Gastrocnemius medialis (tissue), 4 donors: ENCODE measurements at regions of chr11 and their contacts with region 1.

Region 1: GRCh38 chr11:66958232-66958955 is at the start of gene PC:
- DNase-seq: peak; percentile 100
- ATAC-seq: peak; percentile 96 to 97
- H3K4me3 ChIP-seq: peak within 1 kb of the TSS; percentile 59 to 82 (median 62)
- H3K27ac ChIP-seq: peak within 1 kb of the TSS; percentile 83 to 91 (median 87)
- H3K4me1 ChIP-seq: peaks cover 5 to 22% of the 10 kb centered on the region in 2 donors
- H3K27me3 ChIP-seq: no peaks in the 10 kb centered on the region
- CTCF ChIP-seq: no peak
- POLR2A ChIP-seq: peak; percentile 90 to 95
- total RNA-seq, gene PC: 13.1 to 67.6 (median 32.1) TPM

Region 2: DNA sequence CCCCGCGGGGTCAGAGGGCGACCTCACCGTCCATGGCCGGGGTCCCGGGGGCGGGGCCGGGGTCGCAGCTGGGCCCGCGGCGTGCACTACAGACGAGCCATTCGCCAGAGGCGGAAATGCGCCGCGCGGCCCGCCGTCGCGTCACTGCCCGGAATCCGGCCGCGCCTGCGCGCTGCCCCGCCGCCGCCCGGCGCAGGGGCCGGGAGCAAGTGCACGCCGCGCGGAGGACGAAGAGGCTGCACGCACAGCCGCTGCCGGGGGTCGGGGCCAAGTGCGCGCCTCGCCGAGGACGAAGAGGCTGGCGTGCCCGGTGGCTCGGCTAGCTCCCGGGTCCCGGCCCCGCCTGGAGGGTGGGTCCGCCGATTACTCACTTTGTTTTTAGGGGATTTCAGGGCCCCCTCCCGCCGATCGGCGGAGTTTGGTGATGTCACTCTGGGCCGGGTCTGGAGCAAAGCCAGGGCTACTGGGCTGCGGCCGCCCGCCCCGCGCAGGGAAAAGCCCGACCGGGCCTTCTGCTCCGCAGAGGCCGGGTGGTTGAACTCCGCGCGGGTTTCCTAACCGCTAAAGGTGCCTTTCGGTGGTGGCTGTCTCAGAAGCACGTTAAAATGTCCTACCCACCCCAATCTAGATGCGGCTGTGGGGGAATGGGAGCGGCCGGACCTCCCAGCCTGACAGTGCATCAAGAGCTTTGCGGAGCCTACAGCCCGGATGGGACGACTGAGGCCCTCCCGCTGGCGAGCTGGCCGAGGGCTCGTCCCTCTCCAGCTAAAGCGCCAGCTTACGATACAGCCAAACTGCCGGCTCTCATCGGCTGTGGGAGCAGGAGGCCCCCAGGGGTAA is 1295.4 kb before region 1 on chr11 and contains the start of gene RELA:
- in situ Hi-C with region 1: no loop called
- intact Hi-C with region 1: loop called (anchors 5 kb)
- DNase-seq: peak; percentile 78 to 89
- ATAC-seq: peak; percentile 90
- H3K4me3 ChIP-seq: peak within 1 kb of the TSS; percentile 65 to 91 (median 78)
- H3K27ac ChIP-seq: peak within 1 kb of the TSS; percentile 91 to 99 (median 96)
- H3K4me1 ChIP-seq: peaks cover 22 to 26% of the 10 kb centered on the region in 2 donors
- H3K27me3 ChIP-seq: no peaks in the 10 kb centered on the region
- CTCF ChIP-seq: peak in 3 of 5 experiments; percentile 11 to 43 (median 29)
- POLR2A ChIP-seq: peak; percentile 82 to 88
- total RNA-seq, gene RELA: 39.7 to 68.3 (median 56.3) TPM

Region 3: DNA sequence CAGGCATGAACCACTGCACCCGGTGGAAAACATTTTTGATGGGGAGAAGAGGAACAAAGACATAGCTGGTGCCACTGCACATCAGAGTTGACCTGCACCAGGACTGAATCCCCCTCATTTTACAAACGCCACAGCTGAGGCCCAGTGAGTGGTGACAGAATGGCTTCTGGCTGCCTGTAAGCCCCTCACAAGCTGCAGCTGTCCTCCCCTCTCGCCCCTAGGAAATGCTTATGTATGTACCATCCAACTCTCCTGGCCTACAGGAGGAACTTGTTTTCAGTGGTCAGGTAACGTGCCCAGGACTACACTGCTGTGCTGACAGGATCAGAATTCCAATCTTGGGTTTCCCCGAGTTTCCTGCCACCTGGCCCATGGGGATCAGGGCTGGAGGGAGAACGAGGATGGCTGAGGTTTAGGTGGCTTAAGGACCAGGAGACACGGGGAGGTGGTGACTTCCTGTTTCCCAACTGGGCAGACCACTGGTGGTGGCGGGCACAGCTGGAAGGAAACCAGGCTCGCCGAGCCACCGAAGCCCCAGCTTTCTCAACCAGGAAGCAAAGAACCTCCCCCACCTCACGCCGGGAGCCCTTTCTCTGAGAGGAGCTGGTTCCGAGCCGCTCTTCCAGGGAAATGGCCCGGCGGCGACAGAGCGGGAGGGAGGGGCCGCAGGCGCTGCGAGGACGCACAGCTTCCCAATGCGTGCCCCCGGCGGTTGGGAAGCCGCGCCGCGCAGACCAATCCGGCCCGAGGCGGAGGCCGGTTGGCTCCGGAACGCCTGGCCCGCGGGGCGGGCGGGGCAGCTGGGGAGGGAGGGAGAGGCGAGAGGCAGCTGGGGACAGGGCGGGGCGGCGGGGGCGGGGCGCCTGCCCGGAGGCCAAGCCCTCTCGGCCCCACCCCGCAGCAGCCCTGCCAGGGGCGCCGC is 102.6 kb before region 1 on chr11:
- in situ Hi-C with region 1: no loop called
- intact Hi-C with region 1: loop called (anchors 1 kb)
- DNase-seq: peak; percentile 90 to 94
- ATAC-seq: peak; percentile 87 to 88
- H3K4me3 ChIP-seq: peak overlapping the region; percentile 59 to 96 (median 78)
- H3K27ac ChIP-seq: peak overlapping the region; percentile 82 to 97 (median 88)
- H3K4me1 ChIP-seq: peaks cover 8 to 9% of the 10 kb centered on the region in 2 donors
- H3K27me3 ChIP-seq: no peaks in the 10 kb centered on the region
- CTCF ChIP-seq: no peak
- POLR2A ChIP-seq: peak; percentile 62 to 75

Region 4: DNA sequence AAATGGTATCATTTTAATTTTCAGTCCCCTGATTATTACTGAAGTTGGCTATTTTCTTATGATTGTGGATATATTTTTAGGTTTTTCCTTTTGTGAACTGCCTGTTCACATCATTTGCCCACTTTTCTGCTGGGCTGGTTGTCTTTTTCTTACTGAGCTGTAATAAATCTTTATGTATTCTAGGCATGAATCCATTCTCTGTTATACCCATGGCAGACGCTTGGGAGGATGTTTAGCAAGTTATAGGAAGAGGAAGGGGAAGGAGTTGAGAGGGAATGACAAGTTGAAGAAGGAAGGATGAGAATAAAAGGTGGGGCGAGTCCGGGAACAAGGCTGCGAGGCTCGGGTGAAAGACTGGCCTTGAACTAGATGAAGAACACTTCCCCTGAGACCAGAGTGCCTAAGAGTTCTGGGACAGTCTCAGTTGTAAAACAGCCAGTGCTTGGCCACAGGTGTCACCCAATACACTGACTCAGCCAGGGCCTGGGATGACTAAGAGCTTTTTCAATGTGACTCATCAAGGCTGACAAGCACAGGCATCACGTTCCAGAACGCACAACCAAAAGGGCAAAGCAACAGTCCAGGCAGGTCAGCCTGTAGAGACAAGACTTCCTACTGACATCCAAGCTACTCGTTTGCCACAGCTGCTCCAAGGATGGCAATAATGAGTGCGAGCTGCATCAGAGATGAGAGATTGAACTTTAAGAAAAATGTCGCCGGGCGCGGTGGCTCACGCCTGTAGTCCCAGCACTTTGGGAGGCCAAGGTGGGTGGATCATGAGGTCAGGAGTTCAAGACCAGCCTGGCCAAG is 66.3 kb before region 1 on chr11:
- in situ Hi-C with region 1: no loop called
- intact Hi-C with region 1: loop called (anchors 5 kb)
- DNase-seq: peak; percentile 92 to 95
- ATAC-seq: peak; percentile 95 to 99
- H3K4me3 ChIP-seq: no peak overlapping the region
- H3K27ac ChIP-seq: peak overlapping the region; percentile 64 to 95 (median 80)
- H3K4me1 ChIP-seq: peaks cover 0 to 47% of the 10 kb centered on the region in 2 donors
- H3K27me3 ChIP-seq: no peaks in the 10 kb centered on the region
- CTCF ChIP-seq: no peak
- POLR2A ChIP-seq: peak in 1 of 2 donors; percentile 25

Region 5: DNA sequence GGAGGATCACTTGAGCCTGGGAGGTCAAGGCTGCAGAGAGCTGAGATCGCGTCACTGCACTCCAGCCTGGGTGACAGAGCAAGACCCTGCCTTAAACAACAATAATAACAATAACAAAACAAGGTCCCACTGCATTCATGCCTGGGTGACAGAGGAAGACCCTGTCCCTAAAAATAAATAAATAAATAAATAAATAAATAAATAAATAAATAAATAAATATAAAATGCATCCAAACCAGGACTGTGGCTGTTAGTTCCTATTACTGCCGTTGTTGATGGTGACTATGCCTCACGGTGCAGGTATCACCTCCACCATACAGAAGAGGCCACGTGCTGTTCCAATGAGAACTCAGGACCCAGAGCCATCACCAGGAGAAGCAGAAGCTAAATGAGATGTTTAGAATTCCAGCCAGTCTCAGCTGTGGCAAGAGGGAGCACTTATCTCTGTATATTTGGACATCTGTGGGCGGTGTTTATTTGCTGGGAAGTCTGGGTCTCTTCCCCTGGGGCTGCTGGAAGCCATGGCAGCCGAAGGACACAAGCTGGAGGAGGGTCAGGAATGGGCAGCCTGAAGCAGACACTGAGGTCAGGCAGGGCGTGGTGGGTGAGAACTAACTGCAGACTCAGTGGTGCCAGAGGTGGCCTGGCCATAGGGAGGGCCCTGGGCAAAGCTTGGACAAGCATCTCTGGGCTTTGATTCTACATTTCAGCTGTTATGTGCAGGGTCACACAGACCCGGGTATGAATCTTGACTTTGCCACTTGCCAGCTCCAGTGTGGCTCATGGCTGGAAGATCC is 38.4 kb after region 1 on chr11:
- in situ Hi-C with region 1: no loop called
- intact Hi-C with region 1: no loop called
- DNase-seq: no peak
- ATAC-seq: no peak
- H3K4me3 ChIP-seq: no peak overlapping the region
- H3K27ac ChIP-seq: no peak overlapping the region
- H3K4me1 ChIP-seq: no peaks in the 10 kb centered on the region
- H3K27me3 ChIP-seq: no peaks in the 10 kb centered on the region
- CTCF ChIP-seq: no peak
- POLR2A ChIP-seq: no peak

Region 6: GRCh38 chr11:67118801-67119584 is 160.6 kb after region 1 on chr11 and contains the start of gene KDM2A:
- in situ Hi-C with region 1: no loop called
- intact Hi-C with region 1: loop called (anchors 5 kb)
- DNase-seq: peak; percentile 99
- ATAC-seq: peak; percentile 82 to 85
- H3K4me3 ChIP-seq: peak within 1 kb of the TSS; percentile 82 to 98 (median 94)
- H3K27ac ChIP-seq: peak within 1 kb of the TSS; percentile 98 to 100 (median 99)
- H3K4me1 ChIP-seq: peaks cover 26 to 35% of the 10 kb centered on the region in 2 donors
- H3K27me3 ChIP-seq: no peaks in the 10 kb centered on the region
- CTCF ChIP-seq: peak in 1 of 5 experiments; percentile 27
- POLR2A ChIP-seq: peak; percentile 73 to 84
- total RNA-seq, gene KDM2A: 34.8 to 55.0 (median 44.9) TPM

Region 7: DNA sequence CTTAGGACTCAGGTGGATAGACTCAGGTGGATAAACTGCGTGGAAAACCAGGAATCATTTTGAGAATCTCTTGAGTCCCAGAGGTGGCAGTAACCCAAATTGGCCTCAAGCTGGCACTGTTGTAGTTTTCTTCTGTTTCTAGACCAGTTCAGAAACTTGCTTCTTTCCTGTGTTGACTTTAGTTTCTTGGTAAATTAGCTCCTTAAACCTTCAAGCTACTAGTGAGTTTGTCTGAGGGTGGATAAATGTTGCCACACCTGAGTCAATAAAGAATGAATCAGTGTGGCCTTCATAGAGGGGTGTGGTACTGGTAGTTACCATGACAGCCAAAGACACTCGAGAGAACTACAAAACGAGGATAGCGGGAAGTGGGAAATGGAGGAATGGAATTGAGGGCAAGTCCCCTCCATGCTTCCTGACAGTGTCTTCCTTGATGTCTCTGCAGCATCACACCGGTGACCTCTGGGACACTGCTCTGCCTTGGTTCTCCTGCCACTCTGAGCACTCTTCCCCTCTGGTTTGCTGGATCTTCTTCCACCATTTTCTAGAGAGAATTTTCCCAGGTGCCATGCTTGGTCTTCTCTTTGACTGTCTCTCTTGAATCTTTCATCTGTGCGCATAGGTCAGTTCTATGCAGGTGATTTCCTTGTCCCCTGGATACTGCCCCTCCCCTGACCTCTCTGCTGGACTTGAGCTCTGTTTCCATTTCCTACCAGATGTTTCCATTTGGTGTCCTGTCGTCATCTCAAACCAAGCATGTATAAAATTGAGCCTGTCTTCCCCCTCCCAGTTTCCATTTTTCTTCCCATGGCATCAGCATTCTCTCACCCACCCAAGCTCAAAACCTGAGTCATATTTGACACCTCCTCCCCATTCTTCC is 387.8 kb after region 1 on chr11:
- in situ Hi-C with region 1: no loop called
- intact Hi-C with region 1: no loop called
- DNase-seq: no peak
- ATAC-seq: peak in 1 of 2 donors; percentile 18
- H3K4me3 ChIP-seq: no peak overlapping the region
- H3K27ac ChIP-seq: no peak overlapping the region
- H3K4me1 ChIP-seq: peaks cover 0 to 4% of the 10 kb centered on the region in 2 donors
- H3K27me3 ChIP-seq: no peaks in the 10 kb centered on the region
- CTCF ChIP-seq: no peak
- POLR2A ChIP-seq: no peak